ENCODE measurements at regions of chr15 and their contacts with region 1.

Region 1: GRCh38 chr15:56869573-56869972 is 48.9 kb upstream of the TCF12 start:
- DNase-seq: peak; percentile 77
- ATAC-seq: no peak
- H3K4me3 Mint-ChIP-seq: no peak overlapping the region
- H3K27ac Mint-ChIP-seq: no peak overlapping the region
- H3K4me1 Mint-ChIP-seq: no peaks in the 10 kb centered on the region
- H3K27me3 Mint-ChIP-seq: no peaks in the 10 kb centered on the region

Region 2: DNA sequence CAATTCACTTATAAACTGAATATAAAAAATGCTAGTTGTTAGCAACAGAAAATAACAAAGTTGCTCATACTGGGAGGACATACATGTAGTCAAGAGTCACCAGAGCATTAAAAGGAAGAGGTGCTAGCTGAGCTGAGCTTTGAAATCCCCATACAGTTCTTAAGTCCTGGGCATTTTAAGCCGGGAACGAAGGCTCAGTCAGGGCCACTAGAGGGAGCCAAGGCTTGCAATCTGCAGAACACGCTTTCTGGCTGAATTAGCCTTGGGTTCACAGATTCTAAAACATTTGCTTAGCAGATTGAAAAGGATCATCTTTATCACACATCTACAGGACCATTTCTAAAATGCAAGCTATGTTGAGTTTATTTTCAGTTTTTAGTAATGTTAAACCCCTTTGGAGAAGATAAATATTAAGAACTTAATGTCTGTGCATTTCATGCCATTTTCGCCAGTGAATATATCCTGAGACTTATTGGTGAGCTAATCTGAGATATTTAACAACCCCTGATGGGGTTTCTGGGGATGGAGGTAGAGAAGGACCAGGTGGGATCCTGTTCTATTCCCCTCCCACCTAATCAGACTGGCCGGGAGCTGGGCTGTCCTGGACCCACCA is 378.4 kb before region 1 on chr15:
- CTCF ChIA-PET with region 1: interaction called, 54 read pairs
- POLR2A ChIA-PET with region 1: no interaction called
- intact Hi-C with region 1: loop called (anchors 1 kb)
- DNase-seq: peak; percentile 78
- ATAC-seq: peak; percentile 49
- H3K4me3 Mint-ChIP-seq: no peak overlapping the region
- H3K27ac Mint-ChIP-seq: no peak overlapping the region
- H3K4me1 Mint-ChIP-seq: no peaks in the 10 kb centered on the region
- H3K27me3 Mint-ChIP-seq: no peaks in the 10 kb centered on the region

Region 3: DNA sequence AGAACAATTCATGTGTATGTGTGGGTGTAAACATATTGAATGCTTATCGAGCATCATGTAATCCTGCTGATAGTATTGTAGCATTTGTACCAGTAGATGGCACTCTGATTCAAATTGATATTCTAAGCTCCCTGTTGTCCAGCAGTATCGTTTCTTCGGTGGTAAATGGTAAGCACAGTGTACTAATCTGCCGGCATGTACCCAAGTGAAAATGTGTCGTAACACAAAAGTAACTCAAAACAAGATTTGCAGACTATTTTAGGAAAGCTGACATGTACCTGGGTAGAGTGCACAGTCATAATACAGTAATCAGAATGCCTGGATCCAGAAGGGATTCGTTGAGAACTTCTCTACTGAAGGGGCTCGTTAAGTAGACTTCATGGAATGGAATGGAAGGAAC is 372.9 kb before region 1 on chr15:
- CTCF ChIA-PET with region 1: interaction called, 54 read pairs
- POLR2A ChIA-PET with region 1: no interaction called
- intact Hi-C with region 1: loop called (anchors 1 kb)
- DNase-seq: no peak
- ATAC-seq: peak; percentile 72
- H3K4me3 Mint-ChIP-seq: no peak overlapping the region
- H3K27ac Mint-ChIP-seq: no peak overlapping the region
- H3K4me1 Mint-ChIP-seq: peaks cover 2% of the 10 kb centered on the region
- H3K27me3 Mint-ChIP-seq: peaks cover 10% of the 10 kb centered on the region

Measured in activated CD4-positive, alpha-beta T cell treated with anti-CD3 and anti-CD28 coated beads for 36 hours (primary cell).